ENCODE measurements at regions of chr7 and their contacts with region 1.

Region 1: GRCh38 chr7:155412537-155413253 is 45.2 kb upstream of the EN2 start:
- DNase-seq: peak; percentile 69 to 74
- H3K4me3 ChIP-seq: no peak overlapping the region
- H3K4me3 Mint-ChIP-seq: no peak overlapping the region
- H3K27ac Mint-ChIP-seq: no peak overlapping the region
- H3K4me1 ChIP-seq: no peaks in the 10 kb centered on the region
- H3K4me1 Mint-ChIP-seq: no peaks in the 10 kb centered on the region
- H3K27me3 ChIP-seq: no peaks in the 10 kb centered on the region
- H3K27me3 Mint-ChIP-seq: no peaks in the 10 kb centered on the region
- CTCF ChIP-seq: peak; percentile 84

Region 2: GRCh38 chr7:155524018-155524616 is 111.4 kb after region 1 on chr7:
- CTCF ChIA-PET with region 1: no interaction called
- POLR2A ChIA-PET with region 1: no interaction called
- intact Hi-C with region 1: loop called (anchors 1 kb)
- DNase-seq: no peak
- H3K4me3 ChIP-seq: no peak overlapping the region
- H3K4me3 Mint-ChIP-seq: no peak overlapping the region
- H3K27ac Mint-ChIP-seq: no peak overlapping the region
- H3K4me1 ChIP-seq: no peaks in the 10 kb centered on the region
- H3K4me1 Mint-ChIP-seq: no peaks in the 10 kb centered on the region
- H3K27me3 ChIP-seq: no peaks in the 10 kb centered on the region
- H3K27me3 Mint-ChIP-seq: peaks cover 2% of the 10 kb centered on the region
- CTCF ChIP-seq: no peak

Region 3: GRCh38 chr7:155769701-155770100 is 357.0 kb after region 1 on chr7:
- CTCF ChIA-PET with region 1: no interaction called
- POLR2A ChIA-PET with region 1: no interaction called
- intact Hi-C with region 1: loop called (anchors 2 kb)
- DNase-seq: no peak
- H3K4me3 ChIP-seq: no peak overlapping the region
- H3K4me3 Mint-ChIP-seq: no peak overlapping the region
- H3K27ac Mint-ChIP-seq: no peak overlapping the region
- H3K4me1 ChIP-seq: no peaks in the 10 kb centered on the region
- H3K4me1 Mint-ChIP-seq: no peaks in the 10 kb centered on the region
- H3K27me3 ChIP-seq: no peaks in the 10 kb centered on the region
- H3K27me3 Mint-ChIP-seq: no peaks in the 10 kb centered on the region
- CTCF ChIP-seq: no peak